Caco-2 (cell line): ENCODE measurements at regions of chr3 and their contacts with region 1.

Region 1: DNA sequence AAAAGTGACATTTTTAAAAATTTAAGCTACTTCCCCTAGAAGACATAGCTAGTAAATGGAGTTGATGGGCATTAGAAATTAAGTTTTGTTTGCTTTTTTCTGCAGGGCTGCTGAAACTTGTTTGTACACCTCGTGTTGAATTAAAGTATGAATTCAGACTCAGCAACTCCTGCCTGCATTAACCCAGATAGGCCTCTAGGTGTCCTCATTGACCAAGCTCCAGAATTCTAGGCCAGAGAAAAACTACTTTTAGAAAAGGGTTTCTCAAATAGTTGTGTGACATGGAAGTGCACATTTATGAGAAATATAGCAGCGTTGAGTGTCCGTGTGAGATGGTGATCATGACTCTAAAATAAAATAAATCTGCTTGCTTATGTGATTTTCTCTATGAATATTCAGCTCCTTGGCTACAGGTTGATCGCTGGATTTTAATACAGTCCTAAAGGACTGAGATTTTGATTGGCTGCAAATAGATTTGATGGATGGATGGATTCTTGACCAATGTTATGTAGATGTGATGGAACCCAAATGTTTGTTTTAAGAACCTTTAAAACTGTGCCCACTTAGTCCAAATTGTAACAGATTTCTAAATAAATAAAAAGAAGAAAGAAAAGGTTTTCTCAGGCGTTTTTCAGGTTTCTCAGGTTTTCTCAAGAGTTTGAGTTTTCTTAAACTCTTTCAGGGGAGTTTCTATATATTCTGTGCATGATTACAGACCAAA is 39.4 kb upstream of the LMOD3 start:
- DNase-seq: peak in 1 of 2 experiments; percentile 43
- H3K4me3 ChIP-seq: no peak overlapping the region
- H3K4me3 Mint-ChIP-seq: no peak overlapping the region
- H3K27ac Mint-ChIP-seq: no peak overlapping the region
- H3K4me1 ChIP-seq: peaks cover 8% of the 10 kb centered on the region; the same call in 1 of the 2 replicates
- H3K4me1 Mint-ChIP-seq: peaks cover 14% of the 10 kb centered on the region
- H3K27me3 ChIP-seq: no peaks in the 10 kb centered on the region
- H3K27me3 Mint-ChIP-seq: no peaks in the 10 kb centered on the region
- CTCF ChIP-seq: peak; percentile 86

Region 2: DNA sequence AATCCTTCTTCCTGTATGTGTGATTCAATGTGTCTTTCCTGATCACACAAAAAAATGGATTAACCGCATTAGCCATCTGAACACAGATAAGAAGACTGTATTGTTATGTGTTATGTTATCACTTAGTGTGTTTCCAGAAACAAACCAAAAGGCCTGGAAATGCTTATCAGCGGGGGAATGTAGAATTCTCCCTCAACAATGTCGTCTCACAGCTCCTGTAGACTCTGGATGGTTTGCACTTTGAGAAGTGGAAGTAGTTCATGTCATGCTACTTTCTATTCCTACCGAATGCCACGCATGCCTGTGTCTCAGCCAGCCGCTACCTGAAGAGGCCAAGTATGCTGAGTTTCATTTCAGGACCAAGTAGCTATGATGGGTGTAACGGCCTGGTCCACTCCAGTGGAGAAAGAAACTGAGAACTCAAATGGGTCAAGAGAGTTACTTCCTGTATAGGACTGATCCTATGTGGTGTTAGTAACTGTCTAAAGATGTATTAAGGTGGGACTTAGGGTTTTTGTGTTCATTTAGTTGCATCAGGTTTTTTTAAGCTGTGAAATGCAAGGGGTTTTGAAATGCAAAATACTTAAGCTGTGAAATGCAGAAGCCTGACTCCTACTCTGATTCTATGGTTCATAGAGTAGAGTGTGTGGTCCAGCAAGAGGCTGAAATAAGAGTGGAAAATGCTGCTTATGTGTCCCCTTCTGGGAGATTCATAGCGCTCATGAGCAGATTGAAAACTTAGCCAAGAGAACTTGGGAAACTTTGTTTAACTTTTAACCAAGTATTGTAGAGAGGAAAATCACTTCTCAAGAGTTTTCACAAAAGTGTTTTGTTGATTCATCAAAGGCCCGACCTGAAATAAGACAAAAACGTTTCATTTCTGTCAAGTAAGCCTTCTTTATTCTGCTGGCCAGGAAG is 79.2 kb after region 1 on chr3:
- CTCF ChIA-PET with region 1: interaction called, 3 read pairs
- POLR2A ChIA-PET with region 1: no interaction called
- intact Hi-C with region 1: loop called (anchors 5 kb)
- DNase-seq: peak; percentile 67 to 73
- H3K4me3 ChIP-seq: no peak overlapping the region
- H3K4me3 Mint-ChIP-seq: peak overlapping the region; percentile 60
- H3K27ac Mint-ChIP-seq: peak overlapping the region; percentile 96
- H3K4me1 ChIP-seq: peaks cover 89% of the 10 kb centered on the region
- H3K4me1 Mint-ChIP-seq: peaks cover 23% of the 10 kb centered on the region
- H3K27me3 ChIP-seq: no peaks in the 10 kb centered on the region
- H3K27me3 Mint-ChIP-seq: no peaks in the 10 kb centered on the region
- CTCF ChIP-seq: no peak

Region 3: GRCh38 chr3:69324362-69325025 is 162.7 kb after region 1 on chr3:
- CTCF ChIA-PET with region 1: no interaction called
- POLR2A ChIA-PET with region 1: no interaction called
- intact Hi-C with region 1: loop called (anchors 5 kb)
- DNase-seq: peak in 1 of 2 experiments; percentile 27
- H3K4me3 ChIP-seq: no peak overlapping the region
- H3K4me3 Mint-ChIP-seq: no peak overlapping the region
- H3K27ac Mint-ChIP-seq: peak overlapping the region; percentile 81
- H3K4me1 ChIP-seq: peaks cover 49% of the 10 kb centered on the region
- H3K4me1 Mint-ChIP-seq: peaks cover 30% of the 10 kb centered on the region
- H3K27me3 ChIP-seq: no peaks in the 10 kb centered on the region
- H3K27me3 Mint-ChIP-seq: no peaks in the 10 kb centered on the region
- CTCF ChIP-seq: peak; percentile 50 to 52

Region 4: DNA sequence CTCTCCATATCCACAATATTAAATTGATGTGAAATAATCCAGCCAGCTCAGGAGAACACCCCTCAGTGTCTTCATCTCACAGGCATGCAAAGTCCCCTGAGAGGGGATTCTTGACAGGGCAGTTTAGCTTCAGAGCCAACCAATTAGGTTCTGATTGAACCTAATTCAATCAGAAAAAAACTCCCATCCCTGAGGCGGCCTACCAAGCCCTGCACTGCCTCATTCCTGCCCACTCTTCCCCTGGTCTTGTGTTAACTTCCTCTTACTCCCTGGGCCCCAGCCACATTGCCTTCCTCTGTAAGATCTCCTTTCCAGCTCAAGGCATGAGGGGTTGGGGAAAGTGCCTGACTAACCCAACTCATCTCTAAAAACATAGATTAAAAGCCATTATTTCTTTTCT is 178.0 kb after region 1 on chr3:
- CTCF ChIA-PET with region 1: no interaction called
- POLR2A ChIA-PET with region 1: no interaction called
- intact Hi-C with region 1: no loop called
- DNase-seq: no peak
- H3K4me3 ChIP-seq: no peak overlapping the region
- H3K4me3 Mint-ChIP-seq: no peak overlapping the region
- H3K27ac Mint-ChIP-seq: no peak overlapping the region
- H3K4me1 ChIP-seq: no peaks in the 10 kb centered on the region
- H3K4me1 Mint-ChIP-seq: no peaks in the 10 kb centered on the region
- H3K27me3 ChIP-seq: no peaks in the 10 kb centered on the region
- H3K27me3 Mint-ChIP-seq: no peaks in the 10 kb centered on the region
- CTCF ChIP-seq: no peak

Region 5: DNA sequence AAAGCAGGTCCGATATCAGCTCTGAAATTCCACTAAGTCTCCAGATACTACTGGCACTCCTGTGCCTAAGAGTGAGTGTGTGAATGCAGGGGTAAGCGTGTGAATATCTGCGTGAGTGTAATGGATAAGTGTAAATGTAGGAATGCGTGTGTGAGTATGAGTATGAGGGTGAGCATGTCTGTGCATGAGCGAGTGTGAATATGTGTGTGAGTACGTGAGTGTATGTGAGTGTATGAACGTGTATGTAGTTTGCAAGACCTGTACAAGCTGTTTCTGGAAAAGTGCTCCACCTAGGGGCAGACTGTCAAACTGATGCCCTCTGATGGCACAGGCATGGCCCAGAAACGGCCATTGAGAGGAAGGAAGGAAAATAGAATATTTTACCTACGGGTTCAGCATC is 248.5 kb after region 1 on chr3:
- CTCF ChIA-PET with region 1: interaction called, 12 read pairs
- POLR2A ChIA-PET with region 1: no interaction called
- intact Hi-C with region 1: loop called (anchors 1 kb)
- DNase-seq: peak; percentile 71 to 76
- H3K4me3 ChIP-seq: no peak overlapping the region
- H3K4me3 Mint-ChIP-seq: peak overlapping the region; percentile 8
- H3K27ac Mint-ChIP-seq: no peak overlapping the region
- H3K4me1 ChIP-seq: no peaks in the 10 kb centered on the region
- H3K4me1 Mint-ChIP-seq: no peaks in the 10 kb centered on the region
- H3K27me3 ChIP-seq: no peaks in the 10 kb centered on the region
- H3K27me3 Mint-ChIP-seq: no peaks in the 10 kb centered on the region
- CTCF ChIP-seq: peak; percentile 72 to 88

Region 6: GRCh38 chr3:69671082-69671952 is 509.6 kb after region 1 on chr3:
- CTCF ChIA-PET with region 1: interaction called, 3 read pairs
- POLR2A ChIA-PET with region 1: no interaction called
- intact Hi-C with region 1: loop called (anchors 1 kb)
- DNase-seq: peak in 1 of 2 experiments; percentile 49
- H3K4me3 ChIP-seq: no peak overlapping the region
- H3K4me3 Mint-ChIP-seq: no peak overlapping the region
- H3K27ac Mint-ChIP-seq: no peak overlapping the region
- H3K4me1 ChIP-seq: no peaks in the 10 kb centered on the region
- H3K4me1 Mint-ChIP-seq: no peaks in the 10 kb centered on the region
- H3K27me3 ChIP-seq: no peaks in the 10 kb centered on the region; the same call in 1 of the 2 replicates
- H3K27me3 Mint-ChIP-seq: no peaks in the 10 kb centered on the region
- CTCF ChIP-seq: peak; percentile 58 to 67